Caco-2 (cell line): ENCODE measurements at regions of chr6 and their contacts with region 1.

Region 1: DNA sequence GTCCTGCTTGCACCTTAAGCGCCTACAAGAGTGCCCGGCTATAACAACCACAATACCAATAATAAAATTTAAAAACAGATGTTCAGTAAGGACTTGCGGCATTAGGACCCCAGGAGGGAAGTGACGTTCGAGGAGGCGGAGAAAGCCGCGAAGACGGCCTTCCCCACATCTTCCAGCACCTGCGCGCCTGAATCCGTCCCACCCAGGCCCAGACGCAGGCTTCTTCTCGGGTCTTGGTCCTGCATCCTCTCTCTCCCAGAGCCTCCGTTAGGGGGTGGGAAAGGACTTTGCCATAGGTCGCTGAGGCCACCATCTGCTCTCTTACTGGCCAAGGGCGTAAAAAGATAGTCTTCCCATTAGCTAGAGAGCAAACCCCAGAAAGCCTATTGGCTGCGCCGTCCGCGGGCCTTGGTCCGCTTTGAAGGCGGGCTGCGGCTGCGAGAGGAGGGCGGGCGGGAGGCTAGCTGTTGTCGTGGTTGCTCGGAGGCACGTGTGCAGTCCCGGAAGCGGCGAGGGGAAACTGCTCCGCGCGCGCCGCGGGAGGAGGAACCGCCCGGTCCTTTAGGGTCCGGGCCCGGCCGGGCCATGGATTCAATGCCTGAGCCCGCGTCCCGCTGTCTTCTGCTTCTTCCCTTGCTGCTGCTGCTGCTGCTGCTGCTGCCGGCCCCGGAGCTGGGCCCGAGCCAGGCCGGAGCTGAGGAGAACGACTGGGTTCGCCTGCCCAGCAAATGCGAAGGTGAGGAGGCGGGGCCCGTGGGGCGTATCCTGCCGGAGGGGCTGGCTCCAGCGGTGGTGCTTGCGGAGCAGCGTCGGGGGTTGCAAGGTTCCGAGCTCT is at the start of gene CNPY3:
- DNase-seq: peak; percentile 95 to 96
- H3K4me3 ChIP-seq: peak within 1 kb of the TSS; percentile 56
- H3K4me3 Mint-ChIP-seq: peak within 1 kb of the TSS; percentile 100
- H3K27ac Mint-ChIP-seq: peak within 1 kb of the TSS; percentile 76
- H3K4me1 ChIP-seq: peaks cover 8% of the 10 kb centered on the region
- H3K4me1 Mint-ChIP-seq: peaks cover 13% of the 10 kb centered on the region
- H3K27me3 ChIP-seq: no peaks in the 10 kb centered on the region
- H3K27me3 Mint-ChIP-seq: no peaks in the 10 kb centered on the region
- CTCF ChIP-seq: no peak
- total RNA-seq, gene CNPY3: 49.2 and 56.1 TPM in 2 replicates

Region 2: GRCh38 chr6:42960243-42961019 is 31.2 kb after region 1 on chr6 and contains the start of gene GNMT:
- CTCF ChIA-PET with region 1: no interaction called
- POLR2A ChIA-PET with region 1: interaction called, 11 read pairs
- intact Hi-C with region 1: loop called (anchors 1 kb)
- DNase-seq: peak; percentile 76 to 84
- H3K4me3 ChIP-seq: peak within 1 kb of the TSS; percentile 47
- H3K4me3 Mint-ChIP-seq: peak within 1 kb of the TSS; percentile 93
- H3K27ac Mint-ChIP-seq: peak within 1 kb of the TSS; percentile 59
- H3K4me1 ChIP-seq: no peaks in the 10 kb centered on the region
- H3K4me1 Mint-ChIP-seq: peaks cover 8% of the 10 kb centered on the region
- H3K27me3 ChIP-seq: no peaks in the 10 kb centered on the region
- H3K27me3 Mint-ChIP-seq: no peaks in the 10 kb centered on the region
- CTCF ChIP-seq: peak in 1 of 2 experiments; percentile 11
- total RNA-seq, gene GNMT: not detected in 2 replicates

Region 3: DNA sequence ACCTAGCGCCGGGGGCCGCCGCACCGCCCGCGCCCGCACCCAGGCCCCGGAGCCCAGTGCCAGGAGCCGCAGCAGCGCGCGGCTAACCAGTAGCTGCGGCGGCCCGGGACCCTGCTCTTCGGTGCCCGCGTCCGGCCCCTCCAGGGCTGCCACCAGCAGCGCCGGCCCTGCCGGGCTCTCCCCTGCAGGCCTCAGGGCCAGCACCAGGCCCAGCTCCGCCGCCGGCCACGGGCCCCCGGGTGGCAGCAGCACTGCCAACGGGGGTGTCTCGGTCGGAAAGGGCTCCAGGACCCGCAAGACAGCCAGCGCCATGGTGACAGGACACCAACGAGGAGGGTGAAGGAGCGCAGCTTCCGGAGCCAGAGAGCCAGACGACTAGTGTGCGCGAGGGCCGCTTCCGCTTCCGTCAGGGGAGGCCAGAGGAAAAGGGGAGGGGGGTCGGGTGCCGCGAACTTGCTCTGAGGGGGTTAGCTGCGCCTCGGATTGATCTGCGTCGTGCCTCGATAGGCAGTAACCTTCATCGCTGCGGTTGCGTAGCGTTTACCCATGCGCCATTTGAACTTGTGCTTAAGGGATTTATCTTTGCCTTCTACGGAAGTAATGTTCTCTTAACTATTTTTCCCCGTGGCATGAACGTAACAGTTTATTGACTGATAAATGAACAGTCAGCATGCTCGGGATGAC is 49.8 kb after region 1 on chr6 and contains the start of gene PEX6:
- CTCF ChIA-PET with region 1: no interaction called
- POLR2A ChIA-PET with region 1: interaction called, 16 read pairs
- intact Hi-C with region 1: loop called (anchors 1 kb)
- DNase-seq: peak; percentile 88 to 91
- H3K4me3 ChIP-seq: peak within 1 kb of the TSS; percentile 73
- H3K4me3 Mint-ChIP-seq: peak within 1 kb of the TSS; percentile 83
- H3K27ac Mint-ChIP-seq: peak within 1 kb of the TSS; percentile 86
- H3K4me1 ChIP-seq: no peaks in the 10 kb centered on the region
- H3K4me1 Mint-ChIP-seq: peaks cover 10% of the 10 kb centered on the region
- H3K27me3 ChIP-seq: no peaks in the 10 kb centered on the region
- H3K27me3 Mint-ChIP-seq: no peaks in the 10 kb centered on the region
- CTCF ChIP-seq: no peak
- total RNA-seq, gene PEX6: 6.9 and 8.2 TPM in 2 replicates

Region 4: GRCh38 chr6:42984001-42984923 is 55.1 kb after region 1 on chr6 and contains the start of gene PPP2R5D:
- CTCF ChIA-PET with region 1: interaction called, 6 read pairs
- POLR2A ChIA-PET with region 1: interaction called, 16 read pairs
- intact Hi-C with region 1: loop called (anchors 1 kb)
- DNase-seq: peak; percentile 97
- H3K4me3 ChIP-seq: peak within 1 kb of the TSS; percentile 66
- H3K4me3 Mint-ChIP-seq: peak within 1 kb of the TSS; percentile 91
- H3K27ac Mint-ChIP-seq: peak within 1 kb of the TSS; percentile 87
- H3K4me1 ChIP-seq: no peaks in the 10 kb centered on the region
- H3K4me1 Mint-ChIP-seq: peaks cover 36% of the 10 kb centered on the region
- H3K27me3 ChIP-seq: no peaks in the 10 kb centered on the region
- H3K27me3 Mint-ChIP-seq: no peaks in the 10 kb centered on the region
- CTCF ChIP-seq: no peak
- total RNA-seq, gene PPP2R5D: 44.4 and 45.0 TPM in 2 replicates